Activated B cell treated with CpG ODN at 0.5 μM for 24 hours (primary cell): ENCODE measurements at regions of chr10 and their contacts with region 1.

Region 1: GRCh38 chr10:112981553-112981952 is 31.5 kb downstream of the TCF7L2 start:
- DNase-seq: no peak
- ATAC-seq: peak; percentile 81
- H3K4me3 Mint-ChIP-seq: no peak overlapping the region
- H3K27ac Mint-ChIP-seq: peak overlapping the region; percentile 59
- H3K4me1 Mint-ChIP-seq: peaks cover 26% of the 10 kb centered on the region
- H3K27me3 Mint-ChIP-seq: peaks cover 62% of the 10 kb centered on the region
- CTCF ChIP-seq: no peak

Region 2: GRCh38 chr10:112949875-112950507 is 31.6 kb before region 1 on chr10 and contains the start of gene TCF7L2:
- CTCF ChIA-PET with region 1: no interaction called
- POLR2A ChIA-PET with region 1: no interaction called
- intact Hi-C with region 1: loop called (anchors 1 kb)
- DNase-seq: peak; percentile 24
- ATAC-seq: peak; percentile 50
- H3K4me3 Mint-ChIP-seq: peak within 1 kb of the TSS; percentile 88
- H3K27ac Mint-ChIP-seq: no peak within 1 kb of the TSS
- H3K4me1 Mint-ChIP-seq: peaks cover 25% of the 10 kb centered on the region
- H3K27me3 Mint-ChIP-seq: peaks cover 45% of the 10 kb centered on the region
- CTCF ChIP-seq: no peak
- total RNA-seq, gene TCF7L2: 0.71 and 2.2 TPM in 2 replicates

Region 3: DNA sequence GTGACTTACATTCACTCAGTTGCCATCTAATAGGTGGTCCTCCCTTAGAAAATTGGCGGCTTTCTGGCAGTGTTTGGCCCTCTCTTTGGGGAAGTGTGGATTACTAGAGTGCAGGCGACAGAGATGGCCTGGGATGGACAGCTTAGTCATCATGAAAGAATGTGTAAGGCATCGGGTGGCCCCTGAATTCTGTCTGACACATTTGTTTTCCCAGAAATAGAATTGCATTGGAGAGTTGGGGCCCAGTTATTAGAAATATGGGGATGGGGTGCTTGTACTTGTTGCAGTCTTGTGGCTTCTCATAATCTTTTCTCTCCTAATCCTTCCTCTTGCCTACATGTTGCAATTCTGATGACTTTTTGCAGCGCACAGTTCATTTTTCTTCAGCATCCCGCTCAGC is 17.7 kb before region 1 on chr10:
- CTCF ChIA-PET with region 1: no interaction called
- POLR2A ChIA-PET with region 1: interaction called, 5 read pairs
- intact Hi-C with region 1: loop called (anchors 2 kb)
- DNase-seq: no peak
- ATAC-seq: no peak
- H3K4me3 Mint-ChIP-seq: no peak overlapping the region
- H3K27ac Mint-ChIP-seq: no peak overlapping the region
- H3K4me1 Mint-ChIP-seq: peaks cover 4% of the 10 kb centered on the region
- H3K27me3 Mint-ChIP-seq: peaks cover 44% of the 10 kb centered on the region
- CTCF ChIP-seq: no peak

Region 4: DNA sequence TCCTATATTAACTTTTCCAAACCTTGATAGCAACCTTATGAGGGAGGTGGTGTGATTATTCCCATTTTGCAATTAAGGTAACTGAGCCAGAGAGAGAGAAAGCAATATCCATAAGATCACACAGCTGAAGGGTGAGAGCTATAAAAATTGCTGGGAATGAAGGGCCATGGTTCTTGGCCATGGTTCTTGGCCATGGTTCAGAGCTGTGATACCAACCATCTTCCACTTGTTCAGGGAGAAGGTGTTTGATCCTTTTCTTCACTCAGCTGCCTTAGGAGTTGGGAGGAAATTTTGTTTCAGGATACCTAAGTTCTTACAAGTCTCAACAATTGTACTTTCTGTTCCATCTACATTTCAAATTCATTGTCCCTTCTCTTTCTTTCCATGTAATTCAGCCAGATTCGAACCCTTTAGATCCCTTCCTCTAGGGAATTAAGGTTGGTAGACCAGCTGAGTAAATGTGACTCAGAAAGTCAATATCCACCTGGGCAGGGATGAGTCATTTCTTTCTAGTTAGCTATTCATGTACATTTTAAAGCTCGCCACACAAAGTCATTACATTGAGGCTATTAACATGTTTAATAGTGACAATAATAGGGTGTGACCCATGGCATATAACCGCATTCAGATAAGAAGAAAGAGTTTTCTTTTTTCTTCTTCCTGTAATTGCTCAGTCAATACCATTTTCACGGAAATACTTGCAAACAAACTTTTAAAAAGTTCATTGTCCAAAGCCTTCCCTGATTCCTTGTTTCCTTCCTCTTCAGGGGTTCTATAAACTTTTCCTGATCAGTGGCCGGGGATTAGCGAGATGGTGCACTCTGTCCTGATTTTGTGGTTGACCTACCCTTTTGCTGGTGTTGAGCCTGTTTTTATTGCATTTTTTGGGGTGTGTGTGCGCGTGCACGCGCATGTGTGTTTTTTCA is 111.9 kb after region 1 on chr10:
- CTCF ChIA-PET with region 1: no interaction called
- POLR2A ChIA-PET with region 1: no interaction called
- intact Hi-C with region 1: loop called (anchors 2 kb)
- DNase-seq: no peak
- ATAC-seq: no peak
- H3K4me3 Mint-ChIP-seq: peak overlapping the region; percentile 21
- H3K27ac Mint-ChIP-seq: no peak overlapping the region
- H3K4me1 Mint-ChIP-seq: peaks cover 21% of the 10 kb centered on the region
- H3K27me3 Mint-ChIP-seq: peaks cover 4% of the 10 kb centered on the region
- CTCF ChIP-seq: no peak